ENCODE measurements at regions of chr3 and their contacts with region 1.

Region 1: DNA sequence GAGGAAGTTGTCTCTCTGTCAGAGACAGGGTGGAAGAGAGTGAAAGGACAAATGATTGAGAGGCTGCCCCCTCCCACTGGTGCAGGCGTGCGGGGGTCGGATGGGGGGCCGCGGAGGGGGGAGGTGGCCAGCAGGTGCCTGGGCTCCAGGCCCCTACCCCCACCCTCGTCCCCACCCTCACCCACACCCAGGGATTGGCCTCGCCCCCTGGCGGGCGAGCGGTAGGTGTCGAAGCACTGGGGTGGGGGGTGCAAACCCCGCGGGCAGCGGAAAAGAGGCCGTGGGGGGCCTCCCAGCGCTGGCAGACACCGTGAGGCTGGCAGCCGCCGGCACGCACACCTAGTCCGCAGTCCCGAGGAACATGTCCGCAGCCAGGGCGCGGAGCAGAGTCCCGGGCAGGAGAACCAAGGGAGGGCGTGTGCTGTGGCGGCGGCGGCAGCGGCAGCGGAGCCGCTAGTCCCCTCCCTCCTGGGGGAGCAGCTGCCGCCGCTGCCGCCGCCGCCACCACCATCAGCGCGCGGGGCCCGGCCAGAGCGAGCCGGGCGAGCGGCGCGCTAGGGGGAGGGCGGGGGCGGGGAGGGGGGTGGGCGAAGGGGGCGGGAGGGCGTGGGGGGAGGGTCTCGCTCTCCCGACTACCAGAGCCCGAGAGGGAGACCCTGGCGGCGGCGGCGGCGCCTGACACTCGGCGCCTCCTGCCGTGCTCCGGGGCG is at the start of gene KAT2B:
- DNase-seq: peak; percentile 93
- ATAC-seq: peak; percentile 74
- H3K4me3 ChIP-seq: peak within 1 kb of the TSS; percentile 68 to 87 (median 84)
- H3K4me3 Mint-ChIP-seq: peak within 1 kb of the TSS; percentile 97
- H3K27ac ChIP-seq: peak within 1 kb of the TSS; percentile 85 to 87
- H3K27ac Mint-ChIP-seq: peak within 1 kb of the TSS; percentile 98
- H3K4me1 ChIP-seq: peaks cover 43 to 50% of the 10 kb centered on the region in 2 donors
- H3K4me1 Mint-ChIP-seq: peaks cover 43% of the 10 kb centered on the region
- H3K27me3 ChIP-seq: no peaks in the 10 kb centered on the region
- H3K27me3 Mint-ChIP-seq: no peaks in the 10 kb centered on the region
- CTCF ChIP-seq: peak; percentile 85
- total RNA-seq, gene KAT2B: 57.5 and 60.3 TPM in 2 replicates

Region 2: GRCh38 chr3:19146685-19147650 is 893.0 kb before region 1 on chr3:
- CTCF ChIA-PET with region 1: no interaction called
- POLR2A ChIA-PET with region 1: no interaction called
- intact Hi-C with region 1: loop called (anchors 5 kb)
- DNase-seq: peak; percentile 89
- ATAC-seq: peak; percentile 63
- H3K4me3 ChIP-seq: peak overlapping the region; percentile 49 to 84 (median 68)
- H3K4me3 Mint-ChIP-seq: peak overlapping the region; percentile 95
- H3K27ac ChIP-seq: peak overlapping the region; percentile 50 to 80
- H3K27ac Mint-ChIP-seq: peak overlapping the region; percentile 91
- H3K4me1 ChIP-seq: peaks cover 18 to 22% of the 10 kb centered on the region in 2 donors
- H3K4me1 Mint-ChIP-seq: peaks cover 24% of the 10 kb centered on the region
- H3K27me3 ChIP-seq: peaks cover 0 to 5% (median 2%) of the 10 kb centered on the region in 4 experiments
- H3K27me3 Mint-ChIP-seq: peaks cover 13% of the 10 kb centered on the region
- CTCF ChIP-seq: peak; percentile 72

Region 3: GRCh38 chr3:19946832-19947548 is 92.9 kb before region 1 on chr3 and contains the start of gene RAB5A:
- CTCF ChIA-PET with region 1: interaction called, 3 read pairs
- POLR2A ChIA-PET with region 1: interaction called, 7 read pairs
- intact Hi-C with region 1: loop called (anchors 1 kb)
- DNase-seq: peak; percentile 99
- ATAC-seq: peak; percentile 85
- H3K4me3 ChIP-seq: peak within 1 kb of the TSS; percentile 71 to 95 (median 87)
- H3K4me3 Mint-ChIP-seq: peak within 1 kb of the TSS; percentile 93
- H3K27ac ChIP-seq: peak within 1 kb of the TSS; percentile 96 to 98
- H3K27ac Mint-ChIP-seq: peak within 1 kb of the TSS; percentile 97
- H3K4me1 ChIP-seq: peaks cover 18 to 22% of the 10 kb centered on the region in 2 donors
- H3K4me1 Mint-ChIP-seq: peaks cover 47% of the 10 kb centered on the region
- H3K27me3 ChIP-seq: no peaks in the 10 kb centered on the region
- H3K27me3 Mint-ChIP-seq: no peaks in the 10 kb centered on the region
- CTCF ChIP-seq: no peak
- total RNA-seq, gene RAB5A: 59.4 and 61.9 TPM in 2 replicates

Region 4: GRCh38 chr3:20099060-20099459 is 59.1 kb after region 1 on chr3:
- CTCF ChIA-PET with region 1: no interaction called
- POLR2A ChIA-PET with region 1: no interaction called
- intact Hi-C with region 1: no loop called
- DNase-seq: no peak
- ATAC-seq: no peak
- H3K4me3 ChIP-seq: no peak overlapping the region
- H3K4me3 Mint-ChIP-seq: no peak overlapping the region
- H3K27ac ChIP-seq: no peak overlapping the region
- H3K27ac Mint-ChIP-seq: no peak overlapping the region
- H3K4me1 ChIP-seq: peaks cover 6% of the 10 kb centered on the region in 2 donors
- H3K4me1 Mint-ChIP-seq: peaks cover 10% of the 10 kb centered on the region
- H3K27me3 ChIP-seq: no peaks in the 10 kb centered on the region
- H3K27me3 Mint-ChIP-seq: no peaks in the 10 kb centered on the region
- CTCF ChIP-seq: no peak

Region 5: GRCh38 chr3:20125897-20126296 is 86.0 kb after region 1 on chr3:
- CTCF ChIA-PET with region 1: interaction called, 5 read pairs
- POLR2A ChIA-PET with region 1: interaction called, 5 read pairs
- intact Hi-C with region 1: loop called (anchors 1 kb)
- DNase-seq: peak; percentile 91
- ATAC-seq: peak; percentile 97
- H3K4me3 ChIP-seq: peak overlapping the region; percentile 2 to 51 (median 11)
- H3K4me3 Mint-ChIP-seq: peak overlapping the region; percentile 78
- H3K27ac ChIP-seq: peak overlapping the region; percentile 93 to 94
- H3K27ac Mint-ChIP-seq: peak overlapping the region; percentile 95
- H3K4me1 ChIP-seq: peaks cover 28 to 36% of the 10 kb centered on the region in 2 donors
- H3K4me1 Mint-ChIP-seq: peaks cover 36% of the 10 kb centered on the region
- H3K27me3 ChIP-seq: no peaks in the 10 kb centered on the region
- H3K27me3 Mint-ChIP-seq: no peaks in the 10 kb centered on the region
- CTCF ChIP-seq: no peak

Region 6: DNA sequence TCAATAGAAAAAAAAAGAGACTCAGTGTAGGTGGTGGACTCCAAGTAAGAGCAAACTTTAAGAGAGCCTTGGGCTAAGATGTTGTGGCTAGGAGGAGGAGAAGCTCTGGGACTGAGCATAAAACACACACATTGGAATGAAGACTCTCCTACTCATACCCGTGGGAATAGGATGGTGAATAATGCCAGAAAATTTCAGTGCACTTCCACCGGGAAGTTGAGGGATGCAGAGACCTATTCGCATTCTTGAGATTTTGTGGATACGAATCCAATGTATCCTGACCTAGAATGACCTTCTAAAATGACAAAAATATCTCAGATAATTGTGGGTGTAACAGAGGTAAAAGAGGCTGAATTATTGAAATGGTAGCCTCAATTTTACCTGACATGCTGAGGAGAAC is 534.8 kb after region 1 on chr3:
- CTCF ChIA-PET with region 1: no interaction called
- POLR2A ChIA-PET with region 1: no interaction called
- intact Hi-C with region 1: no loop called
- DNase-seq: no peak
- ATAC-seq: no peak
- H3K4me3 ChIP-seq: no peak overlapping the region
- H3K4me3 Mint-ChIP-seq: no peak overlapping the region
- H3K27ac ChIP-seq: no peak overlapping the region
- H3K27ac Mint-ChIP-seq: no peak overlapping the region
- H3K4me1 ChIP-seq: no peaks in the 10 kb centered on the region
- H3K4me1 Mint-ChIP-seq: no peaks in the 10 kb centered on the region
- H3K27me3 ChIP-seq: no peaks in the 10 kb centered on the region
- H3K27me3 Mint-ChIP-seq: no peaks in the 10 kb centered on the region
- CTCF ChIP-seq: no peak